ENCODE measurements at regions of chr2 and their contacts with region 1.

Region 1: GRCh38 chr2:175203621-175204496 is 22.3 kb upstream of the ATP5MC3 start:
- DNase-seq: peak; percentile 57
- ATAC-seq: peak; percentile 100
- H3K4me3 ChIP-seq: peak overlapping the region in 1 of 2 experiments; percentile 27; a peak in 2 of 4 replicates
- H3K27ac ChIP-seq: no peak overlapping the region
- H3K4me1 ChIP-seq: peaks cover 0 to 9% of the 10 kb centered on the region in 2 experiments; a peak in 1 of 4 replicates
- H3K27me3 ChIP-seq: no peaks in the 10 kb centered on the region
- CTCF ChIP-seq: peak; percentile 53 to 74 (median 71)
- POLR2A ChIP-seq: no peak
- RAD21 ChIP-seq: peak; percentile 65

Region 2: GRCh38 chr2:174965992-174966744 is 237.7 kb before region 1 on chr2:
- CTCF ChIA-PET with region 1: no interaction called
- POLR2A ChIA-PET with region 1: no interaction called
- RAD21 ChIA-PET with region 1: no interaction called
- intact Hi-C with region 1: no loop called
- DNase-seq: no peak
- ATAC-seq: no peak
- H3K4me3 ChIP-seq: no peak overlapping the region
- H3K27ac ChIP-seq: no peak overlapping the region
- H3K4me1 ChIP-seq: no peaks in the 10 kb centered on the region
- H3K27me3 ChIP-seq: no peaks in the 10 kb centered on the region
- CTCF ChIP-seq: no peak
- POLR2A ChIP-seq: no peak
- RAD21 ChIP-seq: no peak

Region 3: DNA sequence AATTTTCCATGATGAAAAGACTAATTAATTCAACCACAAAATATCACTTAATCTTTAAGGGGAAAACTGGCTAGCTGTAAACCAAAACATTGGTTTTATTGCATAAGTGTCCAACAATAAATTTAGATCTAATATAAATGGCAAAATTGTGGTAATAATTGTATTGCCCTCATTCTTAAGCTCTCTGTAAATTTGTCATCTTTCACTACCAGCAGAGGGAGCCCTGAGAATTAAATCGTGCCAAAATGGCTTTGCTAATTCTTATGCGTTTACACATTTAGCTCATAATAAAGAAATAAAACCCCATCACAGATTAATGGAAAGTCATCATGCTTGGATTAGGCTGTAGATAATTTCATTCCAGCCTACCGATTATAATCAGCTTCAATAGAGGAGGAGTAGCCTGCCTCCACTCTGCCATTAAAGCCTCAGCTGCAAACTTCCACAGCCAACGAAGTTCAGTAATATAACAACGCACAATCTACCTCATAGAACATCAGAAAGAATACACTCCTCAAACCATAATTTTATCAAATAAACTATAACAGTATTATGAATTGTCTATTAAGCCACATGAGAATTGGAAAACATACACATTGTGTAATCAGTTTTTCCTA is 47.7 kb after region 1 on chr2:
- CTCF ChIA-PET with region 1: interaction called, 17 read pairs
- POLR2A ChIA-PET with region 1: no interaction called
- RAD21 ChIA-PET with region 1: no interaction called
- intact Hi-C with region 1: no loop called
- DNase-seq: peak; percentile 24
- ATAC-seq: peak; percentile 75
- H3K4me3 ChIP-seq: no peak overlapping the region
- H3K27ac ChIP-seq: no peak overlapping the region
- H3K4me1 ChIP-seq: no peaks in the 10 kb centered on the region
- H3K27me3 ChIP-seq: no peaks in the 10 kb centered on the region
- CTCF ChIP-seq: peak; percentile 53 to 78 (median 65); a peak in 5 of 6 replicates
- POLR2A ChIP-seq: no peak
- RAD21 ChIP-seq: peak; percentile 51